Activated CD4-positive, alpha-beta memory T cell treated with anti-CD3 and anti-CD28 coated beads, Interleukin-2, amount 10 ng/mL, durations not matched to agents 7 days and 5 days (primary cell): ENCODE measurements at regions of chr6 and their contacts with region 1.

Region 1: GRCh38 chr6:31441365-31442267 is 38.2 kb downstream of the MICA start:
- DNase-seq: peak; percentile 82
- H3K4me3 Mint-ChIP-seq: no peak overlapping the region
- H3K27ac Mint-ChIP-seq: no peak overlapping the region
- H3K4me1 Mint-ChIP-seq: peaks cover 5% of the 10 kb centered on the region
- H3K27me3 Mint-ChIP-seq: peaks cover 67% of the 10 kb centered on the region

Region 2: GRCh38 chr6:31399589-31400466 is 41.8 kb before region 1 on chr6:
- CTCF ChIA-PET with region 1: interaction called, 46 read pairs
- POLR2A ChIA-PET with region 1: interaction called, 9 read pairs
- DNase-seq: peak; percentile 68
- H3K4me3 Mint-ChIP-seq: peak overlapping the region; percentile 87
- H3K27ac Mint-ChIP-seq: peak overlapping the region; percentile 87
- H3K4me1 Mint-ChIP-seq: peaks cover 52% of the 10 kb centered on the region
- H3K27me3 Mint-ChIP-seq: peaks cover 2% of the 10 kb centered on the region